ENCODE measurements at regions of chr2 and their contacts with region 1.

Region 1: GRCh38 chr2:189287982-189288521 is 108.5 kb upstream of the COL5A2 start:
- ATAC-seq: peak in 7 of 8 experiments; percentile 24 to 95 (median 62)
- H3K4me3 ChIP-seq: no peak overlapping the region
- H3K27ac ChIP-seq: no peak overlapping the region
- H3K4me1 ChIP-seq: no peaks in the 10 kb centered on the region

Region 2: GRCh38 chr2:189164746-189165145 is 123.3 kb before region 1 on chr2:
- in situ Hi-C with region 1: no loop called
- ATAC-seq: peak in 3 of 8 experiments; percentile 7 to 26 (median 8)
- H3K4me3 ChIP-seq: no peak overlapping the region
- H3K27ac ChIP-seq: no peak overlapping the region
- H3K4me1 ChIP-seq: peaks cover 5 to 9% of the 10 kb centered on the region in 2 donors

Region 3: GRCh38 chr2:189179570-189179950 is 108.5 kb before region 1 on chr2 and contains the start of gene COL5A2:
- in situ Hi-C with region 1: loop called in 2 of 9 experiments (anchors 10 to 25 kb)
- ATAC-seq: peak; percentile 31 to 84 (median 55)
- H3K4me3 ChIP-seq: peak within 1 kb of the TSS; percentile 19 to 36 (median 32)
- H3K27ac ChIP-seq: no peak within 1 kb of the TSS
- H3K4me1 ChIP-seq: peaks cover 0 to 17% of the 10 kb centered on the region in 2 donors
- total RNA-seq, gene COL5A2: 4.8 to 678 (median 190) TPM

Region 4: DNA sequence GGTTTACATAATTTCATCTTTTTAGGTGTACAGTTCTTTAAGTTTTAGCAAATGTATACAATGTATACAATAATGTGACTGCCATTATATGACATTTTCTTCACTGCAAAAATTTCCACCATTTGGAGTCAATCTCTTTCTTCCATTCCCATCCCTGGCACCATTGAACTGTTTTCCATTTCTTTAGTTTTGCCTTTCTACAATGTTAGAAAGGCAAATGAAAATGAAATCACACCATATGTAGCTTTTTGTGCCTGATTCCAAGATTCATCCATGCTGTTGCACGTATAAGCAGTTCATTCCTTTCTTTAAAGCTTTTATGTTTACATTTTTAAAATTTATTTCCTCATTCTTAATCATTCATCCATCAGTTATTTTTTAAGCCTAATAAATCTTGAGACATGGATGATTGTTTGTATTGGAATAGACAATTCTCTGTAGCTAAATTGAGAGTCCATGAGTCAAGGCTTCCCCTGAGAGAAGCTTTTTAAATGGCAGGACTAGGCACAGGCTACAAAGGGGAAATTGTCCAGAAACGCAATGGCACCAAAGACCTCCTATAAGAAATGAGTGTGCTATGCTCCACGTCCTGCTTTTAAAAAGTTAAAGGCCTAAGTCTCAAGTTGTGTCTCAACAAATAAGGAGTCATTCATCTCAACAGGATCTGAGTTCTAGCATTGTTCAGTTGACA is 99.8 kb before region 1 on chr2:
- in situ Hi-C with region 1: loop called in 2 of 9 experiments (anchors 10 to 25 kb)
- ATAC-seq: no peak
- H3K4me3 ChIP-seq: no peak overlapping the region
- H3K27ac ChIP-seq: no peak overlapping the region
- H3K4me1 ChIP-seq: no peaks in the 10 kb centered on the region

Region 5: GRCh38 chr2:189646521-189646920 is 358.5 kb after region 1 on chr2:
- in situ Hi-C with region 1: no loop called
- ATAC-seq: no peak
- H3K4me3 ChIP-seq: no peak overlapping the region
- H3K27ac ChIP-seq: no peak overlapping the region
- H3K4me1 ChIP-seq: no peaks in the 10 kb centered on the region

Region 6: DNA sequence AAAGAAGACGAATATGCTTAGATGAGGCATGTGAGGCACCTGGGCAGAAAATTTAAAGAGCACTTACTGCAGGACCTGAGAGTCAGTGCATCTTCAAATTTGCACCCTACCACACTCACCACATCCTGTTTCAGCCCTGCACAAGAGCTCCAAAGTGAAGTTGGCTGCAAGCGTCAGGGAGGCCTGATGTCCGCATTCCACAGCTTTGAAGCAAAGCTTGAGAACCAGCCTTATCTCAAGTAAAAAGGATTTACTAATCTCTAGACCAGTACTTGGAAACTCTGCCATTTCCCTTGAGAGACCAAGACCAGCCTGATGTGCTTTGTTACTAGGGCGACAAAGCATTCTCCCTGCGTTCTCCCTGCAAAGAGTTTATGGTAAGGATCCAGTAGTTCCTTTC is 369.8 kb after region 1 on chr2:
- in situ Hi-C with region 1: no loop called
- ATAC-seq: no peak
- H3K4me3 ChIP-seq: no peak overlapping the region
- H3K27ac ChIP-seq: no peak overlapping the region
- H3K4me1 ChIP-seq: peaks cover 6% of the 10 kb centered on the region in 2 donors